B cell (primary cell): ENCODE measurements at regions of chr18 and their contacts with region 1.

Region 1: DNA sequence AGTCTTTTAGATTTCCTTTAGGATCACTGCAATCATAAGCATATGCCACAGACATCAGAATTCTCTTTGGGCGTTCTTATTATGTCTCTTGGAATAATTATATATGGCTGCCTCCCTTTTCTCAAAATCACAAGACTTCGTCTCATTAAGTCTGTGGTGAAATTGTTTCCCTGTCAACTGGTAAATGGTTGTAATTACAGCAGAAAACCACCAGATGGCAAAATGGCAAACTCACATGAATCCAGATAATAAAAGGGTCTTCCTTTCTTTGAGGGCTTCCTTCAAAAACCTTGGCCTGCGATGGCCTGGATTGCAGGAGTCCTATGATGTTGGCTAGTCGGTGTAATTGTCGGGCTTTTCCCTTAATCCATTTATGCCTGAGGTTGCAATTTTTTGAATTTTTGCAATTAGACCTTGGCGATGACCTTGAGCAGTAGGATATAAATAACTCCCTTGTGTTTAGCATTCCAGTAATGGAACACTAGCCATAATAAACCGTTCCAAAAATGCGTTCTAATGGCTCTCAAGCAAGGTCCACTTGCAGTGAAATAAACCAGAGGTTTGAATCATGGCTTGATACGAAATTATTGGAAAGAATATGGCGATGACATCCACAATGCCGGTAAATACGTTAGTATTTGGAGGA is 656.4 kb downstream of the MBD2 start:
- DNase-seq: peak; percentile 23
- ATAC-seq: no peak
- H3K4me3 ChIP-seq: no peak overlapping the region
- H3K4me3 Mint-ChIP-seq: no peak overlapping the region
- H3K27ac ChIP-seq: no peak overlapping the region
- H3K27ac Mint-ChIP-seq: no peak overlapping the region
- H3K4me1 ChIP-seq: no peaks in the 10 kb centered on the region
- H3K4me1 Mint-ChIP-seq: no peaks in the 10 kb centered on the region
- H3K27me3 ChIP-seq: no peaks in the 10 kb centered on the region
- H3K27me3 Mint-ChIP-seq: peaks cover 2% of the 10 kb centered on the region
- CTCF ChIP-seq: peak; percentile 79

Region 2: DNA sequence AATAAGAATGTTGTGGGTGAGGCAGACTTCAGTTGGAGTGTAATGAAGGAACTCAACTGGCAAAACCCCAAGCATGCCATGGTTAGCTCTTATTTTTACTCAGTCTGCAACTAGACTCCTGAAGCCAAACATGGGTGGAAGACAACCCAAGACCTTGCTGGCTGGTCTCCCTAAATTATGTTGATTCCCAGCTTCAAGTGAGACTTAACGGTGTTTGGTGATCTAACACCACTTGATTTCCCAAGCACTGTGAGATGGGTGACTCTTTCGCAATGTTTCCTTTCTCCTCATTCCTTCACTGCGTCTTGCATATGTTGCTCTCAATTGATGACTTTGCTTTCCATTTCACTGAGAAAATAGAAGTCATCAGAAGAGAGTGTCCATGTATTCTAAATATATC is 534.9 kb before region 1 on chr18:
- CTCF ChIA-PET with region 1: no interaction called
- POLR2A ChIA-PET with region 1: no interaction called
- intact Hi-C with region 1: no loop called
- DNase-seq: no peak
- ATAC-seq: no peak
- H3K4me3 ChIP-seq: no peak overlapping the region
- H3K4me3 Mint-ChIP-seq: no peak overlapping the region
- H3K27ac ChIP-seq: no peak overlapping the region
- H3K27ac Mint-ChIP-seq: no peak overlapping the region
- H3K4me1 ChIP-seq: no peaks in the 10 kb centered on the region
- H3K4me1 Mint-ChIP-seq: no peaks in the 10 kb centered on the region
- H3K27me3 ChIP-seq: no peaks in the 10 kb centered on the region
- H3K27me3 Mint-ChIP-seq: no peaks in the 10 kb centered on the region
- CTCF ChIP-seq: no peak

Region 3: DNA sequence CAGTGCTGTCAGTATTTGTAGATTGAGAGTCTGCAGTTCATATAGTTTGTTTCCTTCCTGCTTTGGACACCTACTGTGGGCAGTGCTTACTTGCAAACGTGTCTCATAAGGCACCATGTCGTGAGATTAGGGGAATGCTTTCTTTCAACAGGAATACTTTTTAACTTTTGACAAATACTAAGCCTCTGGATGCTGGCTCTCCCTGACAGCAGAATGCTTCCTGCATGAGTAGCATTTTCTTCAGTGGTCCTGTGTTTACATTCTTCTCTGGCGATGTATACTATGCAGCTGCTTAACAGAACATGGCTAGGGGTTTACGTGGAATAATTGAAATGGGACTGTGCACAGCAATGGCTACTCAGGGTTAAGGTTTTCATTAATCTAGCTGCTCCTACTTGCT is 151.0 kb before region 1 on chr18:
- CTCF ChIA-PET with region 1: no interaction called
- POLR2A ChIA-PET with region 1: no interaction called
- intact Hi-C with region 1: no loop called
- DNase-seq: no peak
- ATAC-seq: no peak
- H3K4me3 ChIP-seq: no peak overlapping the region
- H3K4me3 Mint-ChIP-seq: no peak overlapping the region
- H3K27ac ChIP-seq: no peak overlapping the region
- H3K27ac Mint-ChIP-seq: no peak overlapping the region
- H3K4me1 ChIP-seq: no peaks in the 10 kb centered on the region
- H3K4me1 Mint-ChIP-seq: no peaks in the 10 kb centered on the region
- H3K27me3 ChIP-seq: no peaks in the 10 kb centered on the region
- H3K27me3 Mint-ChIP-seq: no peaks in the 10 kb centered on the region
- CTCF ChIP-seq: no peak

Region 4: GRCh38 chr18:54119524-54120019 is 551.5 kb after region 1 on chr18:
- CTCF ChIA-PET with region 1: interaction called, 5 read pairs
- POLR2A ChIA-PET with region 1: no interaction called
- intact Hi-C with region 1: loop called (anchors 1 kb)
- DNase-seq: peak; percentile 50
- ATAC-seq: peak; percentile 43
- H3K4me3 ChIP-seq: peak overlapping the region in 3 of 5 experiments; percentile 9 to 27 (median 17)
- H3K4me3 Mint-ChIP-seq: peak overlapping the region; percentile 75
- H3K27ac ChIP-seq: no peak overlapping the region
- H3K27ac Mint-ChIP-seq: no peak overlapping the region
- H3K4me1 ChIP-seq: peaks cover 4 to 5% of the 10 kb centered on the region in 2 donors
- H3K4me1 Mint-ChIP-seq: peaks cover 2% of the 10 kb centered on the region
- H3K27me3 ChIP-seq: peaks cover 0 to 2% (median 0%) of the 10 kb centered on the region in 4 experiments
- H3K27me3 Mint-ChIP-seq: peaks cover 20% of the 10 kb centered on the region
- CTCF ChIP-seq: peak; percentile 80